ENCODE measurements at regions of chr10 and their contacts with region 1.

Region 1: GRCh38 chr10:125343118-125343925 is 183.0 kb upstream of the CTBP2 start:
- DNase-seq: peak; percentile 7
- ATAC-seq: peak; percentile 60
- H3K4me3 ChIP-seq: no peak overlapping the region
- H3K27ac ChIP-seq: no peak overlapping the region
- H3K4me1 ChIP-seq: peaks cover 12% of the 10 kb centered on the region
- H3K27me3 ChIP-seq: no peaks in the 10 kb centered on the region
- CTCF ChIP-seq: peak; percentile 43; the same call in 1 of the 2 replicates
- EP300 ChIP-seq: no peak
- POLR2A ChIP-seq: no peak
- RAD21 ChIP-seq: 0 out of 2 replicates have a peak, but pooled peaks have one; percentile 15

Region 2: GRCh38 chr10:125048101-125048864 is 295.0 kb before region 1 on chr10:
- CTCF ChIA-PET with region 1: interaction called, 4 read pairs
- POLR2A ChIA-PET with region 1: no interaction called
- in situ Hi-C with region 1: no loop called
- intact Hi-C with region 1: loop called (anchors 1 kb)
- DNase-seq: peak; percentile 52
- ATAC-seq: peak; percentile 99
- H3K4me3 ChIP-seq: no peak overlapping the region
- H3K27ac ChIP-seq: no peak overlapping the region
- H3K4me1 ChIP-seq: no peaks in the 10 kb centered on the region
- H3K27me3 ChIP-seq: peaks cover 7 to 46% of the 10 kb centered on the region in 2 experiments
- CTCF ChIP-seq: peak; percentile 92
- EP300 ChIP-seq: no peak
- POLR2A ChIP-seq: no peak
- RAD21 ChIP-seq: peak; percentile 75